ENCODE measurements at regions of chr15 and their contacts with region 1.

Region 1: GRCh38 chr15:23877502-23878412 is 190.7 kb upstream of the NDN start:
- DNase-seq: peak; percentile 42
- ATAC-seq: peak; percentile 67 to 79

Region 2: GRCh38 chr15:23642413-23643044 is 235.2 kb before region 1 on chr15:
- intact Hi-C with region 1: loop called (anchors 5 to 10 kb)
- DNase-seq: peak; percentile 45
- ATAC-seq: peak; percentile 81 to 85

Region 3: GRCh38 chr15:23648920-23649515 is 228.7 kb before region 1 on chr15:
- intact Hi-C with region 1: loop called (anchors 5 to 10 kb)
- DNase-seq: no peak
- ATAC-seq: peak in 1 of 2 donors; percentile 59

Region 4: DNA sequence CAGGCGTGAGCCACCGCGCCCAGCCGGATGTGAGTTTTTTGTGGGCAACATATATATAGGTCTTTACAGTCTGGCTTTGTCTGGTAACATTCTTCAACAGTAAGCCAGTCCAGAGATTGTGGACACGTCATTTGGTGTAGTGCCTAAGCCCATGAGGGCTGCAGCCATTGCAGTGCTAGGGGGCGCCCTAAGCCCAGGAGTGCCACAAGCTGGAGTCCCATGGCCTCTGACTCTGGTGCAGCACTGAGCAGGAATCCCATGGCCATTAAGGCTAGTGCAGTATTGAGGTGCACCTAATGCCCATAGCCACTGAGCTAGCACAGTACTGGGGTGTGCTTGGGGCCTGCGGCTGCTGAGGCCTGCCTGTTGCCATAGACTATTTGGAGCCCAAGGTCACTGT is 54.2 kb before region 1 on chr15:
- intact Hi-C with region 1: no loop called
- DNase-seq: no peak
- ATAC-seq: no peak